MCF 10A (cell line): ENCODE measurements at regions of chr13 and their contacts with region 1.

Region 1: DNA sequence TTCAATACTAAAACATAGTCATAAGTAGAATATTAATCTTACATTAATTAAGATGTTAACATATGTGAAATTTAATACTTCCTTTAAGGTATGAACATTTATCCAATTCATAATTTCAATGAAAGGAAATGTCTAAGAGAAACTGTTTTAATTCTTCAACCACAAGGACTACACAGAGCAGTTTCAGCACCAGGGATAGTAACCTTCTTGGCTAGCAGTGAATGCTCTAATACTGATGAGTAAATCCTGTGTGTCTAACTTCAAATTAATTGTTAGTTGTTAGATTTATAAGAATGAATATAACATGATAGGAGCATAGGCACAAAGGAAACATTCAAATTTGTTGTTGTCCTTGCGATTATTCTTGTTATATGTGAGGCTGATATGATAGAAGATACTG is 15.6 kb upstream of the NBEA start:
- DNase-seq: peak; percentile 64
- H3K4me3 Mint-ChIP-seq: no peak overlapping the region
- H3K27ac Mint-ChIP-seq: no peak overlapping the region
- H3K4me1 Mint-ChIP-seq: no peaks in the 10 kb centered on the region
- H3K27me3 Mint-ChIP-seq: no peaks in the 10 kb centered on the region
- CTCF ChIP-seq: no peak

Region 2: DNA sequence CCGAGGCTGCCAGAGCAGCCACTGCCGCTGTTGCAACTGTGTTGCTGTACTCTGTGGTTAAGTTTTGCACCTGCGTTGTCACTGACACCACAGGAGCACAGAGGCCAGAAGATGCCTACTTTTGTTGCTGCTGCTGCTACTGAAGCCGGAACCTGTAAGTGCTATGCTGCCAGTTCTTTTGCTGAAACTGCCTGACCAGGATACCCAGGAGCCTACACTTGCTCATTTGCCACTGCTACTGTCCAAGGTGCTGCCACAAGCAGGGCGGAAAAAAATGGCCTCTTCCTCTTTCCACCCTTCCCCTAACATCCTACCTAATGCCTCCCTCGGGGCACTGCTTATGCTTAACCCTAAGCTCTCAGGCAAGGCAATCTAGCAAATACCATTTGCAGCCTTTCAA is 13.5 kb before region 1 on chr13:
- CTCF ChIA-PET with region 1: no interaction called
- POLR2A ChIA-PET with region 1: no interaction called
- intact Hi-C with region 1: loop called (anchors 1 kb)
- DNase-seq: peak; percentile 32
- H3K4me3 Mint-ChIP-seq: no peak overlapping the region
- H3K27ac Mint-ChIP-seq: no peak overlapping the region
- H3K4me1 Mint-ChIP-seq: no peaks in the 10 kb centered on the region
- H3K27me3 Mint-ChIP-seq: peaks cover 13% of the 10 kb centered on the region
- CTCF ChIP-seq: no peak